CD14-positive monocyte (primary cell): ENCODE measurements at regions of chr12 and their contacts with region 1.

Region 1: DNA sequence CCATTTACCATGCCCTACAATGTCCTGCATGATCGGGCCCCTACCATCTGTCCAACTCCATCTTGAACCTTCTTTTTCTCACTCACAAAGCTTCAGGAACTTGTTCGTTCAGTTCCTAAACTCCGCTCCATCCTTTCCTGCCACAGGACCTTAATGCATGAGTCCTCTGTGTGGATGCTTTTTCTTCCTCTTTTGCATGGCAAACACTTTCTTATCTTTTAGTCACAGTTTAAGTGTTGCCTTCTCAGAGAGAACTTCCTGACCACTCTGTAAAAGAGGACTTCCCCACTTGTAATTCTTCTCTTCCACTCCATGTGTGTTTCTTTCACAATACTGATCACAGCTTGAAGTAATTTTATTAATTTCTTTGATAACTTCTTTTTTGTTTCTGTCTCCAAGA is 54.4 kb upstream of the ETV6 start:
- DNase-seq: peak; percentile 50 to 83 (median 78)
- H3K4me3 ChIP-seq: no peak overlapping the region
- H3K4me3 Mint-ChIP-seq: no peak overlapping the region
- H3K27ac ChIP-seq: peak overlapping the region; percentile 53 to 74
- H3K27ac Mint-ChIP-seq: peak overlapping the region; percentile 28 to 93 (median 78)
- H3K4me1 ChIP-seq: peaks cover 26% of the 10 kb centered on the region in 2 donors
- H3K4me1 Mint-ChIP-seq: peaks cover 31% of the 10 kb centered on the region
- H3K27me3 ChIP-seq: no peaks in the 10 kb centered on the region
- H3K27me3 Mint-ChIP-seq: peaks cover 0 to 6% (median 0%) of the 10 kb centered on the region in 3 donors
- CTCF ChIP-seq: no peak

Region 2: GRCh38 chr12:11658791-11659190 is 63.7 kb after region 1 on chr12:
- intact Hi-C with region 1: no loop called
- DNase-seq: no peak
- H3K4me3 ChIP-seq: no peak overlapping the region
- H3K4me3 Mint-ChIP-seq: no peak overlapping the region
- H3K27ac ChIP-seq: peak overlapping the region in 1 of 2 donors; percentile 34
- H3K27ac Mint-ChIP-seq: peak overlapping the region in 5 of 7 donors; percentile 7 to 80 (median 75)
- H3K4me1 ChIP-seq: peaks cover 78 to 96% of the 10 kb centered on the region in 2 donors
- H3K4me1 Mint-ChIP-seq: peaks cover 94% of the 10 kb centered on the region
- H3K27me3 ChIP-seq: no peaks in the 10 kb centered on the region
- H3K27me3 Mint-ChIP-seq: no peaks in the 10 kb centered on the region
- CTCF ChIP-seq: no peak

Region 3: GRCh38 chr12:11719678-11720099 is 124.6 kb after region 1 on chr12:
- intact Hi-C with region 1: loop called in 1 of 2 experiments (anchors 5 kb)
- DNase-seq: peak; percentile 92 to 97 (median 96)
- H3K4me3 ChIP-seq: peak overlapping the region in 1 of 3 experiments; percentile 16
- H3K4me3 Mint-ChIP-seq: peak overlapping the region; percentile 42 to 69
- H3K27ac ChIP-seq: peak overlapping the region; percentile 52 to 89
- H3K27ac Mint-ChIP-seq: peak overlapping the region; percentile 86 to 95 (median 92)
- H3K4me1 ChIP-seq: peaks cover 41 to 44% of the 10 kb centered on the region in 2 donors
- H3K4me1 Mint-ChIP-seq: peaks cover 75% of the 10 kb centered on the region
- H3K27me3 ChIP-seq: no peaks in the 10 kb centered on the region
- H3K27me3 Mint-ChIP-seq: peaks cover 0 to under 1% (median 0%) of the 10 kb centered on the region in 3 donors
- CTCF ChIP-seq: no peak